CD8-positive, alpha-beta T cell (primary cell): ENCODE measurements at regions of chr19 and their contacts with region 1.

Region 1: GRCh38 chr19:20776083-20777076 is at the start of gene ZNF66:
- DNase-seq: peak; percentile 88 to 97 (median 95)
- ATAC-seq: peak; percentile 98
- H3K4me3 ChIP-seq: peak within 1 kb of the TSS; percentile 96 to 99
- H3K4me3 Mint-ChIP-seq: peak within 1 kb of the TSS; percentile 99
- H3K27ac ChIP-seq: peak within 1 kb of the TSS; percentile 86 to 89
- H3K27ac Mint-ChIP-seq: peak within 1 kb of the TSS; percentile 97
- H3K4me1 ChIP-seq: no peaks in the 10 kb centered on the region
- H3K4me1 Mint-ChIP-seq: peaks cover 33% of the 10 kb centered on the region
- H3K27me3 ChIP-seq: no peaks in the 10 kb centered on the region
- H3K27me3 Mint-ChIP-seq: no peaks in the 10 kb centered on the region
- CTCF ChIP-seq: no peak
- total RNA-seq, gene ZNF66: 7.3 to 8.2 TPM

Region 2: DNA sequence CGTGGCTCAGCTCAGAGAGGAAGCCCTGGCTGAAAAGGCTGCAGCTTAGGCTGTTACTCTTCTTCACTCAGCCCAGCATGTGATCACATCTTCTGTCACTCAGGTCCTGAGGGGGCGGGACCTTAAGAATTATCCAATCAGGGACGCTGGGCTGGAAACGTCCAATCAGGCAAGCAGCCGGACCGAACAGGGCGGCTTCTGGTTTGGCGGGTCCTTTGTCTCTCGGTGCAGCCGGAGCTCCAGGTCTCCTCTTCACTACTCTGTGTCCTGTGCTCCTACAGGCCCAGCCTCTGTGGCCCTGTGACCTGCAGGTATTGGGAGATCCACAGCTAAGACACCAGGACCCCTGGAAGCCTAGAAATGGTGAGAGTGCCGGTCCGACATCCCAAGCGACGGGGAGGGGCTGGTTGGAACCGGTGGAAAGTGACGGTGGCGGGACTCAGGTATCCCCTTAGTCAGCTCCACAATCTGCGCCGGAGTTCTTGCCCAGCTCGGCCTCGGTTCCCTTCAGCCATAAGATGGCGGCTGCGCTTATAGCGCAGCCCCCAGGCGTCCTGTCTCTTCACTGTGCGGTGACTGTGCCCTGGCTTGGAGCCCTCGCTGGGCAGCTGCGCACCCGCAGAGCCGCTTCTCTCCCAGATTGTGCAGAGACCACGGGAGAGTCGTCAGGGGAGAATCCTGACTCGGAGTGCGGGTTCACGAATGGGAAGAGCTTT is 875.5 kb before region 1 on chr19 and contains the start of gene ZNF93:
- CTCF ChIA-PET with region 1: no interaction called
- POLR2A ChIA-PET with region 1: no interaction called
- intact Hi-C with region 1: loop called in 1 of 2 experiments (anchors 10 kb)
- DNase-seq: peak; percentile 83 to 95 (median 91)
- ATAC-seq: peak; percentile 97
- H3K4me3 ChIP-seq: peak within 1 kb of the TSS; percentile 86 to 95
- H3K4me3 Mint-ChIP-seq: peak within 1 kb of the TSS; percentile 94
- H3K27ac ChIP-seq: peak within 1 kb of the TSS; percentile 46 to 75
- H3K27ac Mint-ChIP-seq: peak within 1 kb of the TSS; percentile 91
- H3K4me1 ChIP-seq: peaks cover 10% of the 10 kb centered on the region
- H3K4me1 Mint-ChIP-seq: peaks cover 38% of the 10 kb centered on the region
- H3K27me3 ChIP-seq: no peaks in the 10 kb centered on the region
- H3K27me3 Mint-ChIP-seq: no peaks in the 10 kb centered on the region
- CTCF ChIP-seq: no peak
- total RNA-seq, gene ZNF93: 5.9 to 6.8 TPM

Region 3: DNA sequence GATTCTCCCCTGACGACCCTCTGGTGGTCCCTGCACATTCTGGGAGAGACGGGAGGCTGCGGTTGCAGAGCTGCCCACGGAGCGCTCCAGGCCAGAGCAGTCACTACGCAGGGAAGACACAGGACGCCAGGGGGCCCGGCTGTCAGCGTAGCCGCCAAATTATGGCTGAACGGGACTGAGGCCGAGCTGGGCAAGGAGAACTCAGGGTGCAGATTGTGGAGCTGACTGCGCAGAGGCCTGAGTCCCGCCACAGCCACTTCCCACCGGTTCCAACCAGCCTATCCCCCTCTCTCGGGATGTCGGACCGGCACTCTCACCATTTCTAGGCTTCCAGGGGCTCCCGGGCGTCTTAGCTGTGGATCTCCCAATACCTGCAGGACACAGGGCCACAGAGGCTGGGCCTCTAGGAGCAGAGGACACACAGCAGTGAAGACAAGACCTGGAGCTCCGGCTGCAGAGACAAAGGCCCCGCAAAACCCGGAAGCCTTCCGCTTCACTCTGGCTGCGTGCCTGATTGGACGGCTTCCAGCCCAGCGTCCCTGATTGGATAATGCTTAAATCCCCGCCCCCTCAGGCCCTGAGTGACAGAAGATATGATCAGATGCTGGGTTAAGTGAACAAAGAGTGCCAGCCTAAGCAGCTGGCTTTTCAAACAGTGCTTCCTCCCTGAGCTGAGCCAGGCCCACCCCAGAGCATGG is 210.9 kb before region 1 on chr19 and contains the start of gene ZNF737:
- CTCF ChIA-PET with region 1: no interaction called
- POLR2A ChIA-PET with region 1: interaction called, 24 read pairs
- intact Hi-C with region 1: loop called (anchors 5 kb)
- DNase-seq: peak; percentile 87 to 97 (median 93)
- ATAC-seq: peak; percentile 95
- H3K4me3 ChIP-seq: peak within 1 kb of the TSS; percentile 80 to 92
- H3K4me3 Mint-ChIP-seq: peak within 1 kb of the TSS; percentile 99
- H3K27ac ChIP-seq: peak within 1 kb of the TSS; percentile 81 to 91
- H3K27ac Mint-ChIP-seq: peak within 1 kb of the TSS; percentile 99
- H3K4me1 ChIP-seq: no peaks in the 10 kb centered on the region
- H3K4me1 Mint-ChIP-seq: peaks cover 35% of the 10 kb centered on the region
- H3K27me3 ChIP-seq: no peaks in the 10 kb centered on the region
- H3K27me3 Mint-ChIP-seq: no peaks in the 10 kb centered on the region
- CTCF ChIP-seq: no peak
- total RNA-seq, gene ZNF737: 11.2 to 11.5 TPM

Region 4: GRCh38 chr19:20726755-20727154 is 49.6 kb before region 1 on chr19:
- CTCF ChIA-PET with region 1: no interaction called
- POLR2A ChIA-PET with region 1: no interaction called
- intact Hi-C with region 1: no loop called
- DNase-seq: no peak
- ATAC-seq: no peak
- H3K4me3 ChIP-seq: no peak overlapping the region
- H3K4me3 Mint-ChIP-seq: no peak overlapping the region
- H3K27ac ChIP-seq: no peak overlapping the region
- H3K27ac Mint-ChIP-seq: no peak overlapping the region
- H3K4me1 ChIP-seq: no peaks in the 10 kb centered on the region
- H3K4me1 Mint-ChIP-seq: no peaks in the 10 kb centered on the region
- H3K27me3 ChIP-seq: no peaks in the 10 kb centered on the region
- H3K27me3 Mint-ChIP-seq: peaks cover 2% of the 10 kb centered on the region
- CTCF ChIP-seq: no peak

Region 5: DNA sequence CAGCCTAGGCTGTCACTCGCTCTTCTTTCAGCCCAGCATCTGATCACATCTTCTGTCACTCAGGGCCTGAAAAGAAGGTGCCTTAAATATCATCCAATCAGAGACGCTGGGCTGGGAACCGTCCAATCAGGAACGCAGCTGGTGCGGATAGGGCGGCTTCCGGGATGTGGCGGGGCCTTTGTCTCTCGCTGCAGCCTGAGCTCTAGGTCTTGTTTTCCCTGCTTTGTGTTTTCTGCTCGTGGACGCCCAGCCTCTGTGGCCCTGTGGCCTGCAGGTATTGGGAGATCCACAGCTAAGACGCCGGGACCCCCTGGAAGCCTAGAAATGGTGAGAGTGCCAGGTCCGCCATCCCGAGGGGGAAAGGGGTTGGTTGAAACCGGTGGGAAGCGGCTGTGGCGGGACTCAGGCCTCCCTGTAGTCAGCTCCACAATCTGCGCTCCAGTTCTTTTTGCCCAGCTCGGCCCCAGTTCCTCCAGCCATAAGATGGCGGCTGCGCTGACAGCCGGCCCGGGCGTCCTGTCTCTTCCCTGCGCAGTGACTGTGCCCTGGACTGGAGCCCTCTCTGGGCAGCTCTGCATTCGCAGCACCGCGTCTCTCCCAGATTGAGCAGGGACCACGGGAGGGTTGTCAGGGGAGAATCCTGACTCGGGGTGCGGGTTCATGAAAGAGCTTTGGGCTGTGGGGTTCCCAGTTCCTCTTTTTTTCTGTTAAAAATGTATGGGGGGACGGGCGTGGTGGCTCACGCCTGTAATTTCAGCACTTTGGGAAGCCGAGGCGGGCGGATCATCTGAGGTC is 146.9 kb after region 1 on chr19 and contains the start of gene ZNF85:
- CTCF ChIA-PET with region 1: no interaction called
- POLR2A ChIA-PET with region 1: interaction called, 9 read pairs
- intact Hi-C with region 1: loop called (anchors 1 to 2 kb)
- DNase-seq: peak; percentile 80 to 94 (median 90)
- ATAC-seq: peak; percentile 99
- H3K4me3 ChIP-seq: peak within 1 kb of the TSS; percentile 85 to 93
- H3K4me3 Mint-ChIP-seq: peak within 1 kb of the TSS; percentile 97
- H3K27ac ChIP-seq: peak within 1 kb of the TSS; percentile 82 to 88
- H3K27ac Mint-ChIP-seq: peak within 1 kb of the TSS; percentile 93
- H3K4me1 ChIP-seq: no peaks in the 10 kb centered on the region
- H3K4me1 Mint-ChIP-seq: peaks cover 23% of the 10 kb centered on the region
- H3K27me3 ChIP-seq: no peaks in the 10 kb centered on the region
- H3K27me3 Mint-ChIP-seq: no peaks in the 10 kb centered on the region
- CTCF ChIP-seq: no peak
- total RNA-seq, gene ZNF85: 3.7 to 4.9 TPM

Region 6: DNA sequence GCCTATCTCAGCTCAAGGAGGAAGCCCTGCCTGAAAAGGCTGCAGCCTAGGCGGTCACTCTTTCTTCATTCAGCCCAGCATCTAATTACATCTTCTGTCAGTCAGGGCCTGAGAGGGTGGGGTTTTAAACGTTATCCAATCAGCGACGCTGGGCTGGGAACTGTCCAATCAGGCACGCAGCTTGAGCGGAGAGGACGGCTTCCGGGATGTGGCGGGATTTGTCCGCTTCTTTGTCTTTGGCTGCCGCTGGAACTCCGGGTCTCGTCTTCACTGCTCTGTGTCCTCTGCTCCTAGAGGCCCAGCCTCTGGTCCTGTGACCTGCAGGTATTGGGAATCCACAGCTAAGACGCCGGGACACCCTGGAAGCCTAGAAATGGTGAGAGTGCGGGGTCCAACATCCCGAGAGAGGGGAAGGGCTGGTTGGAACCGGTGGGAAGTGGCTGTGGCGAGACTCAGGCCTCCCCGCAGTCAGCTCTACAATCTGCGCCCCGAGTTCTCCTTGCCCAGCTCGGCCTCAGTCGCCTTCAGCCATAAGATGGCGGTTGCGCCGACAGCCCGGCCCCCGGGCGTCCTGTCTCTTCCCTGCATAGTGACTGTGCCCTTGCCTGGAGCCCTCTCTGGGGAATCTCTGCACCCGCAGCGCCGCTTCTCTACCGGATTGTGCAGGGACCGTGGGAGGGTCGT is 582.5 kb after region 1 on chr19 and contains the start of gene ZNF738:
- CTCF ChIA-PET with region 1: no interaction called
- POLR2A ChIA-PET with region 1: no interaction called
- intact Hi-C with region 1: loop called in 1 of 2 experiments (anchors 5 kb)
- DNase-seq: peak; percentile 67 to 91 (median 83)
- ATAC-seq: peak; percentile 95
- H3K4me3 ChIP-seq: peak within 1 kb of the TSS; percentile 86 to 94
- H3K4me3 Mint-ChIP-seq: peak within 1 kb of the TSS; percentile 98
- H3K27ac ChIP-seq: peak within 1 kb of the TSS; percentile 65 to 82
- H3K27ac Mint-ChIP-seq: peak within 1 kb of the TSS; percentile 92
- H3K4me1 ChIP-seq: peaks cover 7% of the 10 kb centered on the region
- H3K4me1 Mint-ChIP-seq: peaks cover 15% of the 10 kb centered on the region
- H3K27me3 ChIP-seq: no peaks in the 10 kb centered on the region
- H3K27me3 Mint-ChIP-seq: no peaks in the 10 kb centered on the region
- CTCF ChIP-seq: no peak
- total RNA-seq, gene ZNF738: 5.6 to 6.3 TPM

Region 7: GRCh38 chr19:21851596-21852345 is 1075.4 kb after region 1 on chr19:
- CTCF ChIA-PET with region 1: no interaction called
- POLR2A ChIA-PET with region 1: no interaction called
- intact Hi-C with region 1: loop called (anchors 5 kb)
- DNase-seq: peak; percentile 72 to 94 (median 90)
- ATAC-seq: peak; percentile 99
- H3K4me3 ChIP-seq: peak overlapping the region; percentile 95
- H3K4me3 Mint-ChIP-seq: peak overlapping the region; percentile 93
- H3K27ac ChIP-seq: peak overlapping the region; percentile 68 to 80
- H3K27ac Mint-ChIP-seq: peak overlapping the region; percentile 91
- H3K4me1 ChIP-seq: peaks cover 11% of the 10 kb centered on the region
- H3K4me1 Mint-ChIP-seq: peaks cover 26% of the 10 kb centered on the region
- H3K27me3 ChIP-seq: no peaks in the 10 kb centered on the region
- H3K27me3 Mint-ChIP-seq: peaks cover 2% of the 10 kb centered on the region
- CTCF ChIP-seq: no peak